B cell (primary cell): ENCODE measurements at regions of chr2 and their contacts with region 1.

Region 1: GRCh38 chr2:27370026-27370815 is at the starts of genes EIF2B4 and SNX17:
- DNase-seq: peak; percentile 99
- ATAC-seq: peak; percentile 83
- H3K4me3 ChIP-seq: peak within 1 kb of the TSS; percentile 86 to 96 (median 88)
- H3K4me3 Mint-ChIP-seq: peak within 1 kb of the TSS; percentile 96
- H3K27ac ChIP-seq: peak within 1 kb of the TSS; percentile 84 to 95
- H3K27ac Mint-ChIP-seq: peak within 1 kb of the TSS; percentile 100
- H3K4me1 ChIP-seq: peaks cover 31 to 34% of the 10 kb centered on the region in 2 donors
- H3K4me1 Mint-ChIP-seq: peaks cover 31% of the 10 kb centered on the region
- H3K27me3 ChIP-seq: no peaks in the 10 kb centered on the region
- H3K27me3 Mint-ChIP-seq: no peaks in the 10 kb centered on the region
- CTCF ChIP-seq: peak; percentile 77
- total RNA-seq, gene EIF2B4: 50.5 and 56.7 TPM in 2 replicates
- total RNA-seq, gene SNX17: 158 and 162 TPM in 2 replicates

Region 2: DNA sequence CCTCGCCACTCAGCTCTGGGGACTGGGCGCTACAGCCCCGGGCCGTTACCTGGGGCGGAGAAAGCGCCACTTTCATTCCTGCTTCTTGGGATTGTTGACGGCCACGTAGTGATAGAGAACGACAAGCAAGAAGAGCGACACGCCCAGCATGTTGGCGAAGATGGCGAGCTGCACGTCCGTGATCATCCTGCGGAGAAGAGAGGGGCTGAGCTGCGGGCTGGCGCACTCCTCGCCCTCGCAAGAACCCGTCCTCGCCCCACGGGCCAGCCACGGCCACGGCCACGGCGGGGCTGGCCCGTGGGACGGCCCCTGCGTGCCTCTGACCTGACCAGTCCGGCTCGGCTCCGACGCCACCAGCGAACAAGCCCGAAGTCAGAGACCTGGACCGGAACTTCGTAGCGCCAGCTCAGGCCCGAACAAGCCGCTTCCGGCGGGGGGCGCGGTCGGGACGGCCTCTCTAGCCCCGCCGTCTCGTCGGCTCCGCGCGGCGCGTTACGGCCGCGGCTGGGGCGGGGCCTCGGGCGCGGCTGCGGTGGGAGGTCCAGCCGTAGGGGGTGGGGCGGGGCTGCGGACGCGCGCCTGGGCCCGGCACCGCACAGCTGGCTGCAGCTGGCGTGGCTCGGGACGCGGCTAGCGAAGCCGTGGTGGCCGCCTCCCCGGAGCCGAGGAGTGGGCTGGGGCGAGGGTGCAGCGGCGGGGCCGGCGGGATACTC is 298.8 kb before region 1 on chr2 and contains the start of gene OST4:
- CTCF ChIA-PET with region 1: no interaction called
- POLR2A ChIA-PET with region 1: interaction called, 3 read pairs
- intact Hi-C with region 1: loop called (anchors 2 kb)
- DNase-seq: peak; percentile 93
- ATAC-seq: peak; percentile 95
- H3K4me3 ChIP-seq: peak within 1 kb of the TSS; percentile 79 to 91 (median 88)
- H3K4me3 Mint-ChIP-seq: peak within 1 kb of the TSS; percentile 99
- H3K27ac ChIP-seq: peak within 1 kb of the TSS; percentile 64 to 87
- H3K27ac Mint-ChIP-seq: peak within 1 kb of the TSS; percentile 95
- H3K4me1 ChIP-seq: peaks cover 35 to 43% of the 10 kb centered on the region in 2 donors
- H3K4me1 Mint-ChIP-seq: peaks cover 62% of the 10 kb centered on the region
- H3K27me3 ChIP-seq: no peaks in the 10 kb centered on the region
- H3K27me3 Mint-ChIP-seq: no peaks in the 10 kb centered on the region
- CTCF ChIP-seq: no peak
- total RNA-seq, gene OST4: 195 and 199 TPM in 2 replicates

Region 3: DNA sequence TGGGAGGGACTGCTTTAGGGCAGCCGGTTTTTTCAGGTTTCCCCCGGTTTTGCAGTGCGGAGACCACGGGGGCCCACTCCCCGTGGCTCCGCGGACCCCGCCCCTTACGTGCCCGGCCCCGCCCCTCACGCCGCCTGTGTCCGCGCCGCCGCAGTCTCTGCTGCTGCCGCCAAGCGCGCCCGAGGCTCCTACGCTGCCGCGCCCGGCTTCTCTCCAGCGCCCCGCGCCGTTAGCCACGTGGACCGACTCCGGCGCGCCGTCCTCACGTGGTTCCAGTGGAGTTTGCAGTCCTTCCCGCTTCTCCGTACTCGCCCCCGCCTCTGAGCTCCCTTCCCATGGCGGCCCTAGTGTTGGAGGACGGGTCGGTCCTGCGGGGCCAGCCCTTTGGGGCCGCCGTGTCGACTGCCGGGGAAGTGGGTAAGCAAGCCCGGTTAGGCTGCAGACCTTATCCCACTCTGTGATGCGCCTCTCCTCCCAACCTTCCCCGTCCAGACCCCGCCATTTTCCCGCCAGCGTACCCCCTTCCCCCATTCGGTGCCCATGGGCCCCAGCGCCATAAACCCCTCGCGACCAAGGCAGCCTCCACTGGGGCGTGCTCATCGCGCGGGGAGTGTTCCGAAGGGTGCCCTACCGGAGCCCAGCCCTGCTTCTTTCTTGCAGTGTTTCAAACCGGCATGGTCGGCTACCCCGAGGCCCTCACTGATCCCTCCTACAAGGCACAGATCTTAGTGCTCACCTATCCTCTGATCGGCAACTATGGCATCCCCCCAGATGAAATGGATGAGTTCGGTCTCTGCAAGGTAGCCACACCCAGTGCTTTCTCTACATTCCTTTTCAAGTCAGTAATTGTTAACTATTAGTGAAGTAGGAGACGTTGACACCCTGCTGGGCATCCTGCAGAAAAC is 152.8 kb before region 1 on chr2 and contains the start of gene CAD:
- CTCF ChIA-PET with region 1: no interaction called
- POLR2A ChIA-PET with region 1: no interaction called
- intact Hi-C with region 1: loop called (anchors 1 kb)
- DNase-seq: peak; percentile 89
- ATAC-seq: peak; percentile 86
- H3K4me3 ChIP-seq: peak within 1 kb of the TSS; percentile 11 to 85 (median 79)
- H3K4me3 Mint-ChIP-seq: peak within 1 kb of the TSS; percentile 98
- H3K27ac ChIP-seq: peak within 1 kb of the TSS; percentile 70 to 74
- H3K27ac Mint-ChIP-seq: peak within 1 kb of the TSS; percentile 87
- H3K4me1 ChIP-seq: peaks cover 28 to 33% of the 10 kb centered on the region in 2 donors
- H3K4me1 Mint-ChIP-seq: peaks cover 44% of the 10 kb centered on the region
- H3K27me3 ChIP-seq: no peaks in the 10 kb centered on the region
- H3K27me3 Mint-ChIP-seq: no peaks in the 10 kb centered on the region
- CTCF ChIP-seq: no peak
- total RNA-seq, gene CAD: 35.6 and 36.0 TPM in 2 replicates

Region 4: GRCh38 chr2:27380626-27381545 is 10.7 kb after region 1 on chr2 and contains the start of gene ZNF513:
- CTCF ChIA-PET with region 1: interaction called, 12 read pairs
- POLR2A ChIA-PET with region 1: interaction called, 36 read pairs
- intact Hi-C with region 1: loop called (anchors 1 kb)
- DNase-seq: peak; percentile 92
- ATAC-seq: peak; percentile 94
- H3K4me3 ChIP-seq: peak within 1 kb of the TSS; percentile 40 to 66 (median 63)
- H3K4me3 Mint-ChIP-seq: peak within 1 kb of the TSS; percentile 94
- H3K27ac ChIP-seq: peak within 1 kb of the TSS; percentile 56 to 94
- H3K27ac Mint-ChIP-seq: peak within 1 kb of the TSS; percentile 96
- H3K4me1 ChIP-seq: peaks cover 16 to 20% of the 10 kb centered on the region in 2 donors
- H3K4me1 Mint-ChIP-seq: peaks cover 30% of the 10 kb centered on the region
- H3K27me3 ChIP-seq: no peaks in the 10 kb centered on the region
- H3K27me3 Mint-ChIP-seq: no peaks in the 10 kb centered on the region
- CTCF ChIP-seq: no peak
- total RNA-seq, gene ZNF513: 29.0 and 31.7 TPM in 2 replicates

Region 5: DNA sequence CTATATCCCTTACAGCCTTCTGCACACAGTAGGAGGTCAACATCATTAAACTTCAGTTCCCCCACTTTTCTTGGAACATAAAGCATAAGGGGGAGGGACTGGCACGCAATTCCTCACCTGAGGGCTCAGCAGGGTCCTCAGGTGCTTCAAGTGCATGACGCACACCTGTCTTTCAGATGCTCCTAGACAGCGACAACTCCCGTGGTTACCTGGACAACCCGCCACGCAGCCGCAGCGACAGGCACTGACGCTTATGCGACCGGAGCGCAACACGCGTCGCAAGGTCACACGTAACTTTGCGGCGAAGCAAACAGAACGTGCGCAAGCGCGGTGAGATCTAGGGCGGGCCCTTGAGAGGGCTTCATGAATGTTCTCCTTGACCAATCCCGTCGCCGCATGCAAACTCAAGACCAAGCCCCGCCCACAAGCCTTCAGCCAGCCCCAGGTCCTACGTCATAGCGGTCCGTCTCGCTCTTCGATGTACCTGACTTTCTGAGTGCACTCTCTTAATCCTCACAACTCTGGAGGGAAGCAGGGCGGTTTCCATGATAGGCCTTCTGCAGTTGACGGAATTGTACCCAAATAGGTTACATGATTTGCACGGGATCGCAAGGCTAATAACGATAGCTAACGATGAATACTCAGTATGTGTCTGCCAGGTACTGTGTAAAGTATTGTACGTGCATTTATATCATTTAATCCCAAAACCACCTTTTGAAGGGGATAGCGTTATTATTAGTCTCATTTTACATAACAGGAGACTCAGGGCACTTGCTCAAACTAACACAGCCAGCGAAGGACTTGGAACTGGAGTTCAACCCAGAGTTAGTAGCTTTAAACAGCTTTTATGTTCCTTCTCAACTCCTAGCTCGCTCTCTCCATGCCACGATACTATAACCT is 119.5 kb after region 1 on chr2 and contains the start of gene IFT172:
- CTCF ChIA-PET with region 1: no interaction called
- POLR2A ChIA-PET with region 1: no interaction called
- intact Hi-C with region 1: loop called (anchors 1 kb)
- DNase-seq: peak; percentile 100
- ATAC-seq: peak; percentile 97
- H3K4me3 ChIP-seq: peak within 1 kb of the TSS; percentile 57 to 79 (median 59)
- H3K4me3 Mint-ChIP-seq: peak within 1 kb of the TSS; percentile 92
- H3K27ac ChIP-seq: peak within 1 kb of the TSS; percentile 60 to 84
- H3K27ac Mint-ChIP-seq: peak within 1 kb of the TSS; percentile 93
- H3K4me1 ChIP-seq: peaks cover 19 to 21% of the 10 kb centered on the region in 2 donors
- H3K4me1 Mint-ChIP-seq: peaks cover 27% of the 10 kb centered on the region
- H3K27me3 ChIP-seq: peaks cover 0 to 20% (median 10%) of the 10 kb centered on the region in 4 experiments
- H3K27me3 Mint-ChIP-seq: peaks cover 17% of the 10 kb centered on the region
- CTCF ChIP-seq: no peak
- total RNA-seq, gene IFT172: 33.3 and 41.0 TPM in 2 replicates

Region 6: DNA sequence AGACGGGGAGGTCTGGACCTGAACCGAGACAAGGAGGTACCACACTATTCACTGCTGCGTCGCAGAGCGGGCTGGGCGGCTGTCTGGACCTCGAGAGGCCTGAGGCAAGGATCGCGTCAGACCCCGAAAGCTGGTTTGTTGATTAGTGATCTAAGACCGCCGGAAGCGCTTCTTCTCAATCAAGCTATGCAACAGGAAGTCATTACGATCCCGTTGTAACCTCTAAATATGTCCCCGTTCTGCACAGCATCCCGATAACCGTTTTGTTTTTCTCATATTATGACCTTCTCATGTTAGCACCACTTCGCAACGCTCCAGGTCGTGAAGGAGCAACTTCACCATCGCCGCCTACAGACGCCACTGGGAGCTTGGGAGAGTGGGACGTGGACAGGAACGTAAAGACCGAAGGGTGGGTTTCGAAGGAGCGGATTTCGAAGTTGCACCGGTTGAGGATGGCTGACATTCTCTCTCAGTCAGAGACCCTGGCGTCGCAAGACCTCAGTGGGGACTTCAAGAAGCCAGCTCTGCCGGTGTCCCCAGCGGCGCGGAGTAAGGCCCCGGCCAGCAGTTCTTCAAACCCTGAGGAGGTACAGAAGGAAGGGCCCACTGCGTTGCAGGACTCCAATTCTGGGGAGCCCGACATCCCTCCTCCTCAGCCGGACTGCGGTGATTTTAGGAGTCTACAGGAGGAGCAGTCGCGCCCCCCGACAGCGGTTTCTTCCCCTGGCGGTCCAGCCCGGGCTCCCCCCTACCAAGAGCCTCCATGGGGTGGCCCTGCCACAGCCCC is 293.4 kb after region 1 on chr2 and contains the starts of genes SLC4A1AP and SUPT7L:
- CTCF ChIA-PET with region 1: interaction called, 3 read pairs
- POLR2A ChIA-PET with region 1: interaction called, 4 read pairs
- intact Hi-C with region 1: loop called (anchors 2 kb)
- DNase-seq: peak; percentile 94
- ATAC-seq: peak; percentile 80
- H3K4me3 ChIP-seq: peak within 1 kb of the TSS; percentile 75 to 100 (median 97)
- H3K4me3 Mint-ChIP-seq: peak within 1 kb of the TSS; percentile 99
- H3K27ac ChIP-seq: peak within 1 kb of the TSS; percentile 75 to 99
- H3K27ac Mint-ChIP-seq: peak within 1 kb of the TSS; percentile 99
- H3K4me1 ChIP-seq: peaks cover 19 to 23% of the 10 kb centered on the region in 2 donors
- H3K4me1 Mint-ChIP-seq: peaks cover 42% of the 10 kb centered on the region
- H3K27me3 ChIP-seq: no peaks in the 10 kb centered on the region
- H3K27me3 Mint-ChIP-seq: no peaks in the 10 kb centered on the region
- CTCF ChIP-seq: no peak
- total RNA-seq, gene SLC4A1AP: 23.1 and 25.6 TPM in 2 replicates
- total RNA-seq, gene SUPT7L: 40.2 and 40.7 TPM in 2 replicates